ENCODE measurements at regions of chr9 and their contacts with region 1.

Region 1: GRCh38 chr9:112819635-112820496 is 69.3 kb downstream of the SNX30 start:
- DNase-seq: peak; percentile 63
- ATAC-seq: peak; percentile 70
- H3K4me3 ChIP-seq: no peak overlapping the region
- H3K4me3 Mint-ChIP-seq: peak overlapping the region; percentile 8
- H3K27ac ChIP-seq: no peak overlapping the region
- H3K27ac Mint-ChIP-seq: no peak overlapping the region
- H3K4me1 ChIP-seq: peaks cover 10 to 15% of the 10 kb centered on the region in 2 donors
- H3K4me1 Mint-ChIP-seq: peaks cover 17% of the 10 kb centered on the region
- H3K27me3 ChIP-seq: no peaks in the 10 kb centered on the region
- H3K27me3 Mint-ChIP-seq: peaks cover 6% of the 10 kb centered on the region
- CTCF ChIP-seq: peak; percentile 68

Region 2: GRCh38 chr9:112443200-112443599 is 376.7 kb before region 1 on chr9:
- CTCF ChIA-PET with region 1: interaction called, 29 read pairs
- POLR2A ChIA-PET with region 1: no interaction called
- intact Hi-C with region 1: loop called (anchors 1 kb)
- DNase-seq: peak; percentile 49
- ATAC-seq: no peak
- H3K4me3 ChIP-seq: no peak overlapping the region
- H3K4me3 Mint-ChIP-seq: no peak overlapping the region
- H3K27ac ChIP-seq: no peak overlapping the region
- H3K27ac Mint-ChIP-seq: no peak overlapping the region
- H3K4me1 ChIP-seq: peaks cover 30 to 33% of the 10 kb centered on the region in 2 donors
- H3K4me1 Mint-ChIP-seq: peaks cover 29% of the 10 kb centered on the region
- H3K27me3 ChIP-seq: no peaks in the 10 kb centered on the region
- H3K27me3 Mint-ChIP-seq: no peaks in the 10 kb centered on the region
- CTCF ChIP-seq: peak; percentile 61

Measured in B cell (primary cell).